Testis (tissue), 5 donors: ENCODE measurements at regions of chr16 and their contacts with region 1.

Region 1: DNA sequence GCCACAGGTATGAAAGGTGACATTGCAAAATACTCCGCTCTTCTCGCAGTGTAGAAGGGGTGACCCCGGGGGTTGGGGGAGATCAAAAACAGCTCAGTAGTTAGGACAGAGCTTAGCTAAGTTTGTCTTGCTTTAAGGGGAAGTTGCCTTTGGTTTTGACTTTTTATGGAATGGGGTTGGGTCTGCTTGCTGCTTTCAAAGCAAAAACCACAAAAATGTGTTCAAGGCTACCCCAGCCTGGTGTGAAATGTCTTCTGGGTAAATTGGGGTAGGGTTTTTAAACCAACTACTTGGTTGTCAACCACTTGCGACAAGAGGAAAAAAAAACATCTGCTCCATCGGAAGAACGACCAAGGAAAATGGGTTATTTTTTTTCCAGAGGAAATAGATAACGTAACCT is 6.2 kb downstream of the FUS start:
- DNase-seq: no peak
- H3K4me3 ChIP-seq: no peak overlapping the region
- H3K27ac ChIP-seq: no peak overlapping the region
- H3K4me1 ChIP-seq: peaks cover 23% of the 10 kb centered on the region
- H3K27me3 ChIP-seq: no peaks in the 10 kb centered on the region
- CTCF ChIP-seq: no peak
- POLR2A ChIP-seq: no peak

Region 2: GRCh38 chr16:31108035-31108793 is 78.0 kb before region 1 on chr16 and contains the start of gene BCKDK:
- intact Hi-C with region 1: no loop called
- DNase-seq: peak; percentile 82
- H3K4me3 ChIP-seq: peak within 1 kb of the TSS; percentile 80 to 85
- H3K27ac ChIP-seq: peak within 1 kb of the TSS; percentile 88 to 93
- H3K4me1 ChIP-seq: peaks cover 23% of the 10 kb centered on the region
- H3K27me3 ChIP-seq: no peaks in the 10 kb centered on the region
- CTCF ChIP-seq: no peak
- POLR2A ChIP-seq: no peak
- total RNA-seq, gene BCKDK: 68.8 to 69.1 TPM

Region 3: DNA sequence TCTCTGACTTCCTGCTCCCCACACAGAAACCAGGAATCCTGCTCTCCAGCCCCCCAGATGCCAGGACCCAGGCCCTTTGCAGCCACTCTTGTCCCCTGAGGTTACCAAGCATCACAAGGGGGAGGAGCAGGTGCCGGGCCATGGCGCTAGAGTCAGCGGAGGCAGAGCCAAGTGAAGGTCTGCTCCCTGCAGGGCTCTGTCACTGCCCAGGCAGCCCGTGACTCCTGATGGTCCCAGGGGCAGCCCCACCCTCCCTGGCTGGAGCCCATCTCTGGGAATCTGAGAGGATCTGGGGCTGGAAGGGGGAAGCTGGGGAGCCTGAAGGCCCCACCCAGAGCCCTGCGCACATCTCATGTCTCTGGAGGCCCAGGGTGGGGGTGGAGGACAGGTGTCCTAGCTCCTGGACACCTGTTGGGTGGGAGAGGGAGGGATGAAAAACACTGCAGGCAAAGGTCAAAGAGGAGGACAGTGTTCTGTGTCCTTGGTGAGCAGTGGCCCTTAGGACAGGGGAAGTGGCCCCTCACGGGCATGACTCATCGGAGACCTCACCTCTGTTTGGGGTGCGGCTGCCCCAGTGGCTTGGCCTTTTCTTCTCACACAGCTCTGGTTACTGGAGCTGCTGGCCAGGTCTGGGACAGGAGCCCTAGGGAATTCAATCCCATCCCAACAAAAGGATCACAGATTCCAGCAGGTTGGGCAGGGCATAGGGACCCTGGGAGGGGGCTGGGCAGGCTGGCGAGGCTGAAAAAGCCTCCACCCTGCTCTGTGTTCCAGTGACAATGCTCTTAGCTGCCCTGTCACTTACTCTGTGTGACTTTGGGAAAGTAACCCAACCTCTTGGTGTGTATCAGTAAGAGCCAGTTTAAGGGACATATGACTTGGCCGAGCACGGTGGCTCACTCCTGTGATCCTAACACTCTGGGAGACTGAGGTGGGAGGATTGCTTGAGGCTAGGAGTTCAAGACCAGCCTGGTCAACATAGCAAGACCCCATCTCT is 36.0 kb before region 1 on chr16 and contains the start of gene PRSS36:
- intact Hi-C with region 1: loop called (anchors 5 kb)
- DNase-seq: no peak
- H3K4me3 ChIP-seq: no peak within 1 kb of the TSS
- H3K27ac ChIP-seq: no peak within 1 kb of the TSS
- H3K4me1 ChIP-seq: no peaks in the 10 kb centered on the region
- H3K27me3 ChIP-seq: no peaks in the 10 kb centered on the region
- CTCF ChIP-seq: no peak
- POLR2A ChIP-seq: no peak
- total RNA-seq, gene PRSS36: 7.1 to 8.3 TPM

Region 4: GRCh38 chr16:31333686-31334649 is 147.8 kb after region 1 on chr16:
- intact Hi-C with region 1: no loop called
- DNase-seq: peak; percentile 41
- H3K4me3 ChIP-seq: no peak overlapping the region
- H3K27ac ChIP-seq: no peak overlapping the region
- H3K4me1 ChIP-seq: no peaks in the 10 kb centered on the region
- H3K27me3 ChIP-seq: no peaks in the 10 kb centered on the region
- CTCF ChIP-seq: peak in 2 of 3 experiments; percentile 22 to 33
- POLR2A ChIP-seq: no peak